Activated CD4-positive, alpha-beta memory T cell treated with anti-CD3 and anti-CD28 coated beads, Interleukin-2, amount 10 ng/mL, durations not matched to agents 7 days and 5 days (primary cell): ENCODE measurements at regions of chr21 and their contacts with region 1.

Region 1: GRCh38 chr21:36630485-36631206 is 68.3 kb upstream of the SIM2 start:
- DNase-seq: peak; percentile 60
- H3K4me3 Mint-ChIP-seq: no peak overlapping the region
- H3K27ac Mint-ChIP-seq: no peak overlapping the region
- H3K4me1 Mint-ChIP-seq: no peaks in the 10 kb centered on the region
- H3K27me3 Mint-ChIP-seq: peaks cover 7% of the 10 kb centered on the region

Region 2: DNA sequence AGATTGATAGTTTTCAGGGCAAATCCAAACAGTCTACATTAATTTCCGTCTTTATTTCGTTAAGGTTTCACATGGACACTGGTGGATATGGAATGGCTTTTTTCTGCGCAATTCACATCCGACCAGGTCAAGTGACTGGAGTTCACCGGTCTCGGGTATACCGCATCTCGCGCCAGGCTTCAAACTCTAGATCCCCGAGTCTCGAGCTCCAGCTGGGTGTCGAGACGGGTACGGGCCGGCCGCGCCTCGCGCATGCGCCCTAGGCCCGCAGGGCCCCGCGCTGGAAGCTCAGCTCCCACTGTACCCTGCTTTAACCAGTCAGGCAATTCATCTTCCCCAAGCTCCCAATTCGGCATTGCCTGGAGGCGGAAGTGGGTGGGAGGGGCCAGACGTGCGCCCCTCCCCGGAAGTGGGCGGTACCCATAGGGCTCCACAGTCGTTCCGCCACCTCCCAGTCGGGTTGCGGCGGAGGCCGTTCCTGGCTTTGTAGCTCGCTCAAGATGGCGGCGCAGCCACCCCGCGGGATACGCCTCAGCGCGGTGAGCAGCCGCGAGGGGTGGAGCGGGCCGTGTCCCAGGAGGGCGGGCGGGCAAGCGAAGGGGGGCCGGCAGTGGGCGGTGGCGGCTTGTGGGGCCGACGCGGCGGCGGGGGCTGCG is 310.8 kb before region 1 on chr21 and contains the start of gene MORC3:
- CTCF ChIA-PET with region 1: no interaction called
- POLR2A ChIA-PET with region 1: no interaction called
- DNase-seq: peak; percentile 99
- H3K4me3 Mint-ChIP-seq: peak within 1 kb of the TSS; percentile 88
- H3K27ac Mint-ChIP-seq: peak within 1 kb of the TSS; percentile 96
- H3K4me1 Mint-ChIP-seq: peaks cover 26% of the 10 kb centered on the region
- H3K27me3 Mint-ChIP-seq: peaks cover 3% of the 10 kb centered on the region
- total RNA-seq, gene MORC3: 43.6 to 44.3 TPM

Region 3: GRCh38 chr21:36504067-36505058 is 126.3 kb before region 1 on chr21:
- CTCF ChIA-PET with region 1: interaction called, 11 read pairs
- POLR2A ChIA-PET with region 1: no interaction called
- DNase-seq: peak; percentile 34
- H3K4me3 Mint-ChIP-seq: no peak overlapping the region
- H3K27ac Mint-ChIP-seq: no peak overlapping the region
- H3K4me1 Mint-ChIP-seq: no peaks in the 10 kb centered on the region
- H3K27me3 Mint-ChIP-seq: peaks cover 11% of the 10 kb centered on the region

Region 4: GRCh38 chr21:36640721-36641244 is 10.1 kb after region 1 on chr21:
- CTCF ChIA-PET with region 1: interaction called, 10 read pairs
- POLR2A ChIA-PET with region 1: no interaction called
- DNase-seq: no peak
- H3K4me3 Mint-ChIP-seq: no peak overlapping the region
- H3K27ac Mint-ChIP-seq: no peak overlapping the region
- H3K4me1 Mint-ChIP-seq: peaks cover 3% of the 10 kb centered on the region
- H3K27me3 Mint-ChIP-seq: peaks cover 9% of the 10 kb centered on the region

Region 5: DNA sequence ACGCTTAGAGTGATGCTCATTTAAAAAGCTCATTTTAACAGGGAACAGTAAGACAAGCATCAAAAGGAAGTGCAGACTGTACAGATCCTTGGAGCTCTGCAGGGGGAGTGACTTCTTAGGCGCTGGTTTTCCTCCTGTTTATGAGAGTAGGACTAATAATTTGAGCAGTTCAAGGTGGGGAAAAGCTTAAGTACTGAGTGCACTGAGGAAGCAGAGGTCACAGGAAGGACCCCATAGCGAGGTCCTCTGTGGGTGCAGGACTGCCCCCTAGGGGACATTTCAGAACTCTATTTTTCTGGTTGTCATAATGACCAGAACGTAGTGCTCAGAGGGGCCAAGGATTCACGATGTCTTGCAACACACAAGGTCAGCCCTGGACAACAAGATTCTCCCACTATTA is 223.7 kb after region 1 on chr21:
- CTCF ChIA-PET with region 1: interaction called, 18 read pairs
- POLR2A ChIA-PET with region 1: no interaction called
- DNase-seq: no peak
- H3K4me3 Mint-ChIP-seq: no peak overlapping the region
- H3K27ac Mint-ChIP-seq: no peak overlapping the region
- H3K4me1 Mint-ChIP-seq: peaks cover 33% of the 10 kb centered on the region
- H3K27me3 Mint-ChIP-seq: no peaks in the 10 kb centered on the region

Region 6: DNA sequence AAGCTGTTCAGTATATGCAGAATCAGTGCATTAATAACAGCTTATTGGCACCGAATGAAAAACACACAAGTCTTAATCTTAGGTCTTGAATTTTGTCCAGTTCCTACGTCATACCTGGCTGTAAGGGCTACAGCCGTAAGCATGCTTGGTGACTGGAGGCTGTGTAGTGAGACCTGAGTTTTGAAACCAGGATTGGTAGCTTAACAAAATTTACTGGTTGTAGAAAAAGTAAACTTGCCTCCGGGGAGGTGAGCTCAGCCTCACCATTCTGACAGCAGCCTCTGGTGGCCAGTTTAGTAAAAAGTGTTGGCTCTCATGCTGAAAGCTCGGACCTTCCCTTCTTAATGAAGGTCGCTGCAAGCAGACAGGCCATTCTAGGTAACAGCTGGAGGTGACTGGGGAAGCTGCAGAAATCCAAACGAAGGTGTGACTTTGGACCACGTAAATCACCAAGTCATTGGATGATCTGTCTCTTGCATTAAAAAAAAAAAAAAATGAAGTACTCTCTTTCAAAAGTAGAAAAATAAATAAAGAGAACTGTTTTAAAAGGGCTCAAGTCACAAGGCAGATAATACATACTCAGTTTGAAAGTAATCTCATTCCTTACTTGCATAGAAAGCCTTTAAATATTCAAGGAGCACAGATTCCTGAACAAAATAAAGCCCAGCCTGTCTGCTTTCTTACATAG is 287.0 kb after region 1 on chr21:
- CTCF ChIA-PET with region 1: interaction called, 28 read pairs
- POLR2A ChIA-PET with region 1: no interaction called
- DNase-seq: no peak
- H3K4me3 Mint-ChIP-seq: no peak overlapping the region
- H3K27ac Mint-ChIP-seq: no peak overlapping the region
- H3K4me1 Mint-ChIP-seq: peaks cover 15% of the 10 kb centered on the region
- H3K27me3 Mint-ChIP-seq: no peaks in the 10 kb centered on the region

Region 7: GRCh38 chr21:36927719-36928117 is 297.1 kb after region 1 on chr21:
- CTCF ChIA-PET with region 1: interaction called, 28 read pairs
- POLR2A ChIA-PET with region 1: no interaction called
- DNase-seq: peak; percentile 75
- H3K4me3 Mint-ChIP-seq: no peak overlapping the region
- H3K27ac Mint-ChIP-seq: no peak overlapping the region
- H3K4me1 Mint-ChIP-seq: peaks cover 2% of the 10 kb centered on the region
- H3K27me3 Mint-ChIP-seq: no peaks in the 10 kb centered on the region

Region 8: GRCh38 chr21:37009740-37010341 is 379.2 kb after region 1 on chr21:
- CTCF ChIA-PET with region 1: interaction called, 10 read pairs
- POLR2A ChIA-PET with region 1: no interaction called
- DNase-seq: peak; percentile 80
- H3K4me3 Mint-ChIP-seq: peak overlapping the region; percentile 58
- H3K27ac Mint-ChIP-seq: no peak overlapping the region
- H3K4me1 Mint-ChIP-seq: peaks cover 14% of the 10 kb centered on the region
- H3K27me3 Mint-ChIP-seq: peaks cover 28% of the 10 kb centered on the region